Posterior vena cava (tissue), 2 donors: ENCODE measurements at regions of chr3 and their contacts with region 1.

Region 1: GRCh38 chr3:122873741-122874515 is 79.1 kb downstream of the SLC49A4 start:
- DNase-seq: no peak

Region 2: DNA sequence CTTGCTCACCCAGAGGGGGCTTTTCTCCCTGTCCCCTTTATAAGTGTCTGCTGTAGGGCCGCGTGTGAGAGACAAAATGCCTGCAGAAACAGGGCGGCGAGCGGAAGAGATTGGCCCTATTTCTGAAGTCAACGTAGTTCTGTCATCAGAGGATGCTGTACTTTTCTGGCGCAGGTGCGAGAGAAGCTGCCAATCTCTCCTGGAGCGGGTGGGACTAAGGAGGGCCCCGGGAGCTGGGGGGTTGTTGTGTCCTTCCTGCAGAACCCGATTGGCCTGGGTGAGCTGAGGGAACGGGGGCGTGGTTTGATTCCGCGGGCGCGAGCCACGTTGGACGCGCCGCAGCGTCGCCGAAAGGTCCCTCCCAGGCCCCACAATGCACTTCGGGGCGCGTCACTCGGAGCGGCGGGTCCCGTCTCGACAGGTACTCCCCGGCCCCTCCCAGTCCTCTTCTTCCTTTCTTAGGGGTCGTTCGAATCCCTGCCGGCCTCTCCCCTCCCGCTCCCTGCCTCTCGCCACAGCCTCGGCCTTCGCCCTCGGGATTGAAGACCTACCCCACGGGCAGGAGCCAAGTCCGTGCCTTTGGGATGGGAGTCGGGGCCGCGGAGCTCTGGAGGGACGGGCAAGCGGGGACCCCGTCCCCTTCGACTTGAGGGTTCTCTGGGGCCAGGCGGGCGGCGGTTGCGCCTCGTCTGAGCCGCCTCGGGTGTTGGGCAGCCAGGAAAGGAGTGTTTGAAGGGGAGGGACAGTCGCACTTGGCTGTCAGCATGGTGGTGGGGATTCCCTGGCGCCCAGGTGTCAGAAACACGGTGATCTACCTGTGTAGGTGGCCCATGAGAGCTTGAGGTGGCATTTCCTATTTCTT is 327.9 kb after region 1 on chr3 and contains the start of gene SEC22A:
- intact Hi-C with region 1: loop called in 1 of 2 experiments (anchors 5 kb)
- DNase-seq: peak; percentile 98
- total RNA-seq, gene SEC22A: 14.9 to 18.1 TPM